Activated naive CD4-positive, alpha-beta T cell treated with anti-CD3 and anti-CD28 coated beads, Interleukin-2, amount 10 ng/mL, durations not matched to agents 7 days and 5 days (primary cell): ENCODE measurements at regions of chr7 and their contacts with region 1.

Region 1: GRCh38 chr7:74026903-74027551 is 946 bp upstream of the ELN start:
- DNase-seq: peak; percentile 74
- H3K4me3 Mint-ChIP-seq: no peak overlapping the region
- H3K27ac Mint-ChIP-seq: no peak overlapping the region
- H3K4me1 Mint-ChIP-seq: peaks cover 3% of the 10 kb centered on the region
- H3K27me3 Mint-ChIP-seq: peaks cover 85% of the 10 kb centered on the region

Region 2: GRCh38 chr7:74013519-74014267 is 13.3 kb before region 1 on chr7:
- CTCF ChIA-PET with region 1: interaction called, 11 read pairs
- DNase-seq: no peak
- H3K4me3 Mint-ChIP-seq: no peak overlapping the region
- H3K27ac Mint-ChIP-seq: no peak overlapping the region
- H3K4me1 Mint-ChIP-seq: no peaks in the 10 kb centered on the region
- H3K27me3 Mint-ChIP-seq: peaks cover 8% of the 10 kb centered on the region

Region 3: GRCh38 chr7:74039346-74039745 is 12.3 kb after region 1 on chr7:
- CTCF ChIA-PET with region 1: interaction called, 14 read pairs
- DNase-seq: no peak
- H3K4me3 Mint-ChIP-seq: no peak overlapping the region
- H3K27ac Mint-ChIP-seq: no peak overlapping the region
- H3K4me1 Mint-ChIP-seq: no peaks in the 10 kb centered on the region
- H3K27me3 Mint-ChIP-seq: peaks cover 5% of the 10 kb centered on the region